BJ (cell line): ENCODE measurements at regions of chr10 and their contacts with region 1.

Region 1: DNA sequence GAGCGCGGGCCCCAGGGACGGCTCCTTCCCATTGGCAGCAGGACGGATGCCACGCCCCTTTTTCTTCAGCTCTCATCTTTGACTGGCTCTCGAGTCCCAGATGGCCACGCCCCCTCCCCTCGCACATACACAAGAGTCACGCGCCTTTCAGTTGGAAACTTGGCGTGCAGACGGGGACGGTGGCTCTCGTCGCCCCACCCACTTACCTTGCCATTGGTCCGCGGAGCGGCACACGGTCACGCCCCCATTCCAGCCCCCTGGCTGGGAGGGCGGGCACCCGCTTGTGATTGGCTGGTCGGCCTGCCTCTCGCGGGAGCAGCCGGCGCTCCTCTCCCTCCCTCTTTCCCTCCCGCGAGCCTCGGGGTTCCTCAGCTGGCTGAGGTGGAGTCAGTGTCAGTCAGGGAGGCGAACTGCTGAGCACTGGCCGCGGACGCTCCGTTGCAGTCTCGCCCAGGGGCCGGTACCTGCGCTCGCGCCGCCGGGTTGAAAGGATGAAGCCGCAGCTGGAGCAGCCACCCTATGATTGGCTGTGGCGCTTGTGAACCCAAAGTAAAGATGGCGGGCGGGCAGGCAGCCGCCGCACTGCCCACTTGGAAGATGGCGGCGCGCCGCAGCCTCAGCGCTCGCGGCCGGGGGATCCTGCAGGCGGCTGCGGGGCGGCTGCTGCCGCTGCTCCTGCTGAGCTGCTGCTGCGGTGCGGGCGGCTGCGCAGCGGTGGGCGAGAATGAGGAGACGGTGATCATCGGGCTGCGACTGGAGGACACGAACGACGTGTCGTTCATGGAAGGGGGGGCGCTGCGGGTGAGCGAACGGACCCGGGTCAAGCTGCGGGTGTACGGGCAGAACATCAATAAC is at the start of gene CNNM2:
- DNase-seq: peak; percentile 99
- H3K4me3 ChIP-seq: peak within 1 kb of the TSS; percentile 97
- H3K27me3 ChIP-seq: no peaks in the 10 kb centered on the region
- CTCF ChIP-seq: no peak
- polyA plus RNA-seq, gene CNNM2: 2.1 and 3.7 TPM in 2 replicates

Region 2: DNA sequence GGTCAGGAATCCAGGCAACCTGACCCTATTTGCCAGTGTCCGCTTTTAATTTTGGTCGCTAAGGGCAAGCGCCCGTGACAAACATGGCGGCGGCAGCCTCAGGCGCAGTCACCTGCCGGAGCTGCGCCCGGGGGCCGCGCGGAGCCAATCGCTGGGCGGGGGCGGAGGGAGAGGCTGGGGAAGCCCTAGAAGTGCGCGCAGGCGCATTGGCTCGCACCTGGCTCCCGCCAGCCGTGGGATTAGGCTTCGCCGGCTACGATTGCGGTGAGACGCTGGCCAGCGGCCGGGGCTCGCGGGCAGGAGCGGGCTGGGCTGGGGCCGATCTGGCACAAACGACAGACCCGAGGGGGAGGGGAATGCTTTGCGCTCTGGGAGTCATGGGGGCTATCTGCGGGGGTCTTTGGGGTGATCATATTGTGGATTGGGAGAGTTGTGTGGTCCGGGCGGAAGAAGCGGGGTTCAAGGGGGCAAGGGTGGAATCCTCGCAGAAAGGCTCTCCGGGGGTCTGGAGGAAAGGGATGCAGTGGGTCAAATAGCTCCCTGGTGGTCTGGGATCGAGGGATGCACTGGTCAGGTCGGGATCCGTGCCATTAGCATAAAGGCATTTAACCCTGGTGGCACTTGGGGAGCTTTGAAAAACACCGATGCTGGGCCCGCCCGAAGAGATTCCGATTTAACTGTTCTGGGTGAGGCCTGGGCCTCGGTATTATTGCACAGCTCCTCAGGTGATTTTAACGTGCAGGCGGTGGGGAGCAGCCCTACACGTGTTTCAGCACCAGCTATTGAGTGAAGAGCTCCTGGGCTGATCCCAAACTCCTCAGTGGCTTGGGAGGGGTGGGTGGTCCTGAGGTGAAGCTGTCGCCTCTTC is 456.8 kb before region 1 on chr10:
- CTCF ChIA-PET with region 1: no interaction called
- POLR2A ChIA-PET with region 1: no interaction called
- DNase-seq: no peak
- H3K4me3 ChIP-seq: peak overlapping the region; percentile 55
- H3K27me3 ChIP-seq: no peaks in the 10 kb centered on the region; the same call in 1 of the 2 replicates
- CTCF ChIP-seq: no peak

Region 3: GRCh38 chr10:102904346-102904745 is 13.8 kb before region 1 on chr10:
- CTCF ChIA-PET with region 1: interaction called, 57 read pairs
- POLR2A ChIA-PET with region 1: no interaction called
- DNase-seq: no peak
- H3K4me3 ChIP-seq: no peak overlapping the region
- H3K27me3 ChIP-seq: no peaks in the 10 kb centered on the region; the same call in 1 of the 2 replicates
- CTCF ChIP-seq: no peak

Region 4: GRCh38 chr10:103053659-103054581 is 135.7 kb after region 1 on chr10:
- CTCF ChIA-PET with region 1: interaction called, 11 read pairs
- POLR2A ChIA-PET with region 1: no interaction called
- DNase-seq: peak; percentile 25
- H3K4me3 ChIP-seq: no peak overlapping the region
- H3K27me3 ChIP-seq: no peaks in the 10 kb centered on the region
- CTCF ChIP-seq: peak; percentile 64

Region 5: DNA sequence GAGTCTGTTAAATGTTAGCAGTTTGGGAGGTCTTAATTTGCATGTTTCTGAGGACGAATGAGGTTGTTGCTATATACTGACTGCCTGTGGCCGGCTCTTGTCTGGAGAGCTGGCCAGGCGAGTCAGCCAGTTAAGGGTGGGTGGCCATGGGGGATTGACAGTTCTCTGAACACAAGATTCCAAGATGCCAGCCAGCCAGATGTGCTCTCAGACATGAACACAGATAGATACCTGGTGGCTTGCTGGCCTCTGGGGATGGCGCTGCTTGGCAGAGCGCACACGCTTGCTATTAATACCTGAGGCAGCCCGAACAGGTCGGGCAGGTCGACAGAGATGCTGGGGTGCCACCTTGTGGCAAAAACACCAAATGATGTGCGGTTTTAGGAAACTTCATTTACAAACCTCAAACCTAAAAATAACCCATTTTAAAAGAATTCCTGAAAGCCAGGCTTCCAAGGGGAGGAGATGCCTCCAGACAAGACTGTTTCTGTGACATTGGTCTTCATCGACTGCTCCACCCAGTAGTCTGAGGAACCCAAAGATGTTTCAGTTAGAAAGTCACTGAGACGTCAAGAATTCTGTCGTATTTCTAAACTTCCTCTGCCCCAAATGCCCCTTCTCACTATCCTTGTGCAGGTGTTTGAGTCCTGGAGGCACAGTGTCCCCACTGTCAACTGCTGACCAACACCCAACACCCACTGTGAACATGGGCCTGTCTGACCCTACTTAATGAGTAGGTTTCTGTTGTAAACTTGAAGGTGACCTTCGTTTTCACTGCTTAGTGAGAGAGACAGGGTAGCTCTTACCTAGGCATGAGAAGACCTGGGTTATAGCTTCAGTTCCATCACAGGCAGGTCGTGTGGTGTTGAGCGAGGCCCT is 151.5 kb after region 1 on chr10:
- CTCF ChIA-PET with region 1: interaction called, 56 read pairs
- POLR2A ChIA-PET with region 1: interaction called, 3 read pairs
- DNase-seq: no peak
- H3K4me3 ChIP-seq: no peak overlapping the region
- H3K27me3 ChIP-seq: no peaks in the 10 kb centered on the region
- CTCF ChIP-seq: peak; percentile 66

Region 6: DNA sequence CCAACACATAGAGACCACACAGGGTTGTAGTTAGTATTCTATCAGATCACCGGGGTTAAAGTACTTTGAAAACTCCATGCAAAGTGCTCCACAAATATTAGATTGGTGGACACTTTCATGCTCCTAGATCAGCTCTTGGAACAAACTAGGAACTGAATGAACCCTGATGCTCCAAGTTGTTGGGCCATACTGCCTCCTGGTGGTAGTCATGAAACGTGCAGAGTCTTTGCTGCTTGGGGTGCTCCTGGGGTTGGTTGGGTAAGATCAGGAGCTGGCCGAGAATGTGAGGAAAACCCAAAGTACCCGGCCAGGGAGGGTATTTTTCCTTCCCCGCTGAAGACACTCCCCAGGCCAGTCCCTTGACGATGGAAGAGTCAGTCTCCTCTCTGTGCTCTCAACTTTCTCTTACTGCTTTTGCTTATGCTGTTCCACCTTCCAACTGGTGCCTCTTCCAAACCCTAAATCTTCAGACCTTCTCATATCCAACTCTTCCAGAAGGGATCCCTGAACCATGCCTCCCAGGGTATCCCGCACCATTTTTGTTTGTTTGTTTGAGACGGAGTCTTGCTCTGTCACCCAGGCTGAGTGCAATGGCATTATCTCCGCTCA is 326.6 kb after region 1 on chr10:
- CTCF ChIA-PET with region 1: interaction called, 49 read pairs
- POLR2A ChIA-PET with region 1: no interaction called
- DNase-seq: no peak
- H3K4me3 ChIP-seq: no peak overlapping the region
- H3K27me3 ChIP-seq: no peaks in the 10 kb centered on the region
- CTCF ChIP-seq: peak; percentile 92